ENCODE measurements at regions of chr1 and their contacts with region 1.

Region 1: GRCh38 chr1:246566128-246566812 is at the starts of genes CNST and TFB2M:
- DNase-seq: peak; percentile 74 to 96 (median 84)
- ATAC-seq: peak; percentile 65
- H3K4me3 ChIP-seq: peak within 1 kb of the TSS; percentile 92
- H3K4me3 Mint-ChIP-seq: peak within 1 kb of the TSS; percentile 97
- H3K27ac ChIP-seq: peak within 1 kb of the TSS; percentile 86 to 89
- H3K27ac Mint-ChIP-seq: peak within 1 kb of the TSS; percentile 96
- H3K4me1 ChIP-seq: peaks cover 38% of the 10 kb centered on the region
- H3K4me1 Mint-ChIP-seq: peaks cover 58% of the 10 kb centered on the region
- H3K27me3 ChIP-seq: no peaks in the 10 kb centered on the region
- H3K27me3 Mint-ChIP-seq: no peaks in the 10 kb centered on the region
- CTCF ChIP-seq: no peak
- total RNA-seq, gene CNST: 71.9 to 72.6 TPM
- total RNA-seq, gene TFB2M: 8.0 to 9.0 TPM

Region 2: DNA sequence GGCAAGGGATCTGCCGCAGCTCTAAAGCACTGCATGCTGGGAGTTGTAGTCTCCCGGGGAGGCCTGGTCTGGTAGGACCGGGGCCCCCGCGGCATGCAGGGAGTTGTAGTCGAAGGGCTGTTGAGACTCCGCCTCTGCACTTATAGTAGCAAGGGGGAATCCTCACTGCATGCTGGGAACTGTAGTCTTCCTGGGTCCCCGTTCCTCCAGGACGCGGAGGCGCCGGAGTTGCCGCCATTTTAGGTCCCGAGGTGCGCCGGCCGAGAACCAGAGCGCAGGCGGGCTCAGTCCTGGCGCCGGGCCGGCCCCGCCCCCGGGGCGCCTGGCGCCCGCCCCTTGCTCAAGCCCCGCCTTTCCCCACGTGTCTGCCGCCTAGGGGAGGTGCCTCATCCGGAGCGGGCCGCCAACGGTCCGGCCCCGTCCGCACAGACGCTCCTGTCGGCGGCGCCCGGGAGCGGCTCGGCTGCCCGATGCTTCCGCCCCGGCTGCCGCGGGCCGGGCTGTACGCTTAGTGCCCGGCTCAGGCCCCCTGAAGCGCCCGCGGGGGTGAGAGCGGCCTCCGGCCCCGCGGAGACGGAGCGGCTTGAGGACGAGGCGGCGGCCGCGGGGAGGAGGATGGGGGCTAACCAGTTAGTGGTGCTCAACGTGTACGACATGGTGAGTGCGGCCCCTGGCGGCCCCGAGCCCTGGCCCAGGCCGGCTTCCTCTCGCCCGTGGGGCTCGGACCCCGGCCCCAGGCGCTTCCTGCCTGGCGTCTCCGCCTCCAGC is 1913.4 kb before region 1 on chr1 and contains the start of gene DESI2:
- CTCF ChIA-PET with region 1: no interaction called
- POLR2A ChIA-PET with region 1: no interaction called
- intact Hi-C with region 1: loop called in 1 of 2 experiments (anchors 10 kb)
- DNase-seq: peak; percentile 95 to 100 (median 97)
- ATAC-seq: peak; percentile 92
- H3K4me3 ChIP-seq: peak within 1 kb of the TSS; percentile 80
- H3K4me3 Mint-ChIP-seq: peak within 1 kb of the TSS; percentile 88
- H3K27ac ChIP-seq: peak within 1 kb of the TSS; percentile 53 to 74
- H3K27ac Mint-ChIP-seq: peak within 1 kb of the TSS; percentile 83
- H3K4me1 ChIP-seq: peaks cover 23% of the 10 kb centered on the region
- H3K4me1 Mint-ChIP-seq: peaks cover 21% of the 10 kb centered on the region
- H3K27me3 ChIP-seq: no peaks in the 10 kb centered on the region
- H3K27me3 Mint-ChIP-seq: no peaks in the 10 kb centered on the region
- CTCF ChIP-seq: peak; percentile 46
- total RNA-seq, gene DESI2: 12.9 to 13.7 TPM

Region 3: DNA sequence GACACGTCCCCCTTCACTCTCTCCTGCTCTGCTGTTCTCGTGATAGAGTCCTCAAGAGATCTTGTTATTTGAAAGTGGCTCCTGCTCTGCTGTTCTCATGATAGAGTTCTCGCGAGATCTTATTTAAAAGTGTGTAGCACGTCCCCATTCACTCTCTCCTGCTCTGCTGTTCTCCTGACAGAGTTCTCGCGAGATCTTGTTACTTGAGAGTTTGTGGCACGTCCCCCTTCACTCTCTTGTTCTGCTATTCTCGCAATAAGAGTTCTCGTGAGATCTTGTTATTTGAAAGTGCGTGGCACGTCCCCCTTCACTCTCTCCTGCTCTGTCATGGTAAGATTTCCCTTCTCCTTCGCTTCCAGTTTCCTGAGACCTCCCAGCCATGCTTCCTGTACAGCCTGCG is 107.0 kb before region 1 on chr1:
- CTCF ChIA-PET with region 1: no interaction called
- POLR2A ChIA-PET with region 1: no interaction called
- intact Hi-C with region 1: no loop called
- DNase-seq: no peak
- ATAC-seq: no peak
- H3K4me3 ChIP-seq: no peak overlapping the region
- H3K4me3 Mint-ChIP-seq: no peak overlapping the region
- H3K27ac ChIP-seq: no peak overlapping the region
- H3K27ac Mint-ChIP-seq: no peak overlapping the region
- H3K4me1 ChIP-seq: no peaks in the 10 kb centered on the region
- H3K4me1 Mint-ChIP-seq: peaks cover 23% of the 10 kb centered on the region
- H3K27me3 ChIP-seq: no peaks in the 10 kb centered on the region
- H3K27me3 Mint-ChIP-seq: no peaks in the 10 kb centered on the region
- CTCF ChIP-seq: no peak

Region 4: GRCh38 chr1:246492611-246493245 is 73.5 kb before region 1 on chr1:
- CTCF ChIA-PET with region 1: no interaction called
- POLR2A ChIA-PET with region 1: no interaction called
- intact Hi-C with region 1: no loop called
- DNase-seq: peak in 7 of 14 experiments; percentile 12 to 37 (median 20)
- ATAC-seq: no peak
- H3K4me3 ChIP-seq: no peak overlapping the region
- H3K4me3 Mint-ChIP-seq: no peak overlapping the region
- H3K27ac ChIP-seq: no peak overlapping the region
- H3K27ac Mint-ChIP-seq: no peak overlapping the region
- H3K4me1 ChIP-seq: no peaks in the 10 kb centered on the region
- H3K4me1 Mint-ChIP-seq: peaks cover 14% of the 10 kb centered on the region
- H3K27me3 ChIP-seq: no peaks in the 10 kb centered on the region
- H3K27me3 Mint-ChIP-seq: no peaks in the 10 kb centered on the region
- CTCF ChIP-seq: peak; percentile 52

Region 5: GRCh38 chr1:246579818-246580217 is 13.5 kb after region 1 on chr1:
- CTCF ChIA-PET with region 1: interaction called, 3 read pairs
- POLR2A ChIA-PET with region 1: interaction called, 11 read pairs
- intact Hi-C with region 1: no loop called
- DNase-seq: no peak
- ATAC-seq: no peak
- H3K4me3 ChIP-seq: no peak overlapping the region
- H3K4me3 Mint-ChIP-seq: peak overlapping the region; percentile 21
- H3K27ac ChIP-seq: no peak overlapping the region
- H3K27ac Mint-ChIP-seq: peak overlapping the region; percentile 64
- H3K4me1 ChIP-seq: peaks cover 36% of the 10 kb centered on the region
- H3K4me1 Mint-ChIP-seq: peaks cover 92% of the 10 kb centered on the region
- H3K27me3 ChIP-seq: no peaks in the 10 kb centered on the region
- H3K27me3 Mint-ChIP-seq: no peaks in the 10 kb centered on the region
- CTCF ChIP-seq: no peak

Region 6: GRCh38 chr1:246609632-246610031 is 43.4 kb after region 1 on chr1:
- CTCF ChIA-PET with region 1: no interaction called
- POLR2A ChIA-PET with region 1: interaction called, 3 read pairs
- intact Hi-C with region 1: loop called (anchors 5 kb)
- DNase-seq: no peak
- ATAC-seq: no peak
- H3K4me3 ChIP-seq: no peak overlapping the region
- H3K4me3 Mint-ChIP-seq: no peak overlapping the region
- H3K27ac ChIP-seq: no peak overlapping the region
- H3K27ac Mint-ChIP-seq: peak overlapping the region; percentile 85
- H3K4me1 ChIP-seq: peaks cover 36% of the 10 kb centered on the region
- H3K4me1 Mint-ChIP-seq: peaks cover 63% of the 10 kb centered on the region
- H3K27me3 ChIP-seq: no peaks in the 10 kb centered on the region
- H3K27me3 Mint-ChIP-seq: no peaks in the 10 kb centered on the region
- CTCF ChIP-seq: no peak

Region 7: GRCh38 chr1:246647113-246647512 is 80.8 kb after region 1 on chr1:
- CTCF ChIA-PET with region 1: no interaction called
- POLR2A ChIA-PET with region 1: no interaction called
- intact Hi-C with region 1: loop called (anchors 5 kb)
- DNase-seq: no peak
- ATAC-seq: no peak
- H3K4me3 ChIP-seq: no peak overlapping the region
- H3K4me3 Mint-ChIP-seq: no peak overlapping the region
- H3K27ac ChIP-seq: no peak overlapping the region
- H3K27ac Mint-ChIP-seq: no peak overlapping the region
- H3K4me1 ChIP-seq: no peaks in the 10 kb centered on the region
- H3K4me1 Mint-ChIP-seq: peaks cover 24% of the 10 kb centered on the region
- H3K27me3 ChIP-seq: no peaks in the 10 kb centered on the region
- H3K27me3 Mint-ChIP-seq: no peaks in the 10 kb centered on the region
- CTCF ChIP-seq: no peak

Region 8: GRCh38 chr1:247103859-247104591 is 537.8 kb after region 1 on chr1 and contains the start of gene ZNF669:
- CTCF ChIA-PET with region 1: no interaction called
- POLR2A ChIA-PET with region 1: no interaction called
- intact Hi-C with region 1: loop called in 1 of 2 experiments (anchors 10 kb)
- DNase-seq: peak; percentile 81 to 95 (median 88)
- ATAC-seq: peak; percentile 98
- H3K4me3 ChIP-seq: peak within 1 kb of the TSS; percentile 97
- H3K4me3 Mint-ChIP-seq: peak within 1 kb of the TSS; percentile 87
- H3K27ac ChIP-seq: peak within 1 kb of the TSS; percentile 64 to 74
- H3K27ac Mint-ChIP-seq: peak within 1 kb of the TSS; percentile 82
- H3K4me1 ChIP-seq: peaks cover 15% of the 10 kb centered on the region
- H3K4me1 Mint-ChIP-seq: peaks cover 20% of the 10 kb centered on the region
- H3K27me3 ChIP-seq: peaks cover 12 to 17% of the 10 kb centered on the region in 2 experiments
- H3K27me3 Mint-ChIP-seq: peaks cover 33% of the 10 kb centered on the region
- CTCF ChIP-seq: no peak
- total RNA-seq, gene ZNF669: 13.2 to 15.1 TPM

Measured in CD4-positive, alpha-beta T cell (primary cell).